ENCODE measurements at regions of chr20 and their contacts with region 1.

Region 1: GRCh38 chr20:50415516-50416113 is 94.6 kb upstream of the PTPN1 start:
- DNase-seq: peak; percentile 99
- ATAC-seq: peak; percentile 97

Region 2: GRCh38 chr20:50286609-50287008 is 129.0 kb before region 1 on chr20:
- intact Hi-C with region 1: no loop called
- DNase-seq: no peak
- ATAC-seq: peak; percentile 66

Region 3: GRCh38 chr20:50395258-50395729 is 20.3 kb before region 1 on chr20:
- intact Hi-C with region 1: loop called (anchors 1 kb)
- DNase-seq: peak; percentile 91
- ATAC-seq: peak; percentile 84

Region 4: DNA sequence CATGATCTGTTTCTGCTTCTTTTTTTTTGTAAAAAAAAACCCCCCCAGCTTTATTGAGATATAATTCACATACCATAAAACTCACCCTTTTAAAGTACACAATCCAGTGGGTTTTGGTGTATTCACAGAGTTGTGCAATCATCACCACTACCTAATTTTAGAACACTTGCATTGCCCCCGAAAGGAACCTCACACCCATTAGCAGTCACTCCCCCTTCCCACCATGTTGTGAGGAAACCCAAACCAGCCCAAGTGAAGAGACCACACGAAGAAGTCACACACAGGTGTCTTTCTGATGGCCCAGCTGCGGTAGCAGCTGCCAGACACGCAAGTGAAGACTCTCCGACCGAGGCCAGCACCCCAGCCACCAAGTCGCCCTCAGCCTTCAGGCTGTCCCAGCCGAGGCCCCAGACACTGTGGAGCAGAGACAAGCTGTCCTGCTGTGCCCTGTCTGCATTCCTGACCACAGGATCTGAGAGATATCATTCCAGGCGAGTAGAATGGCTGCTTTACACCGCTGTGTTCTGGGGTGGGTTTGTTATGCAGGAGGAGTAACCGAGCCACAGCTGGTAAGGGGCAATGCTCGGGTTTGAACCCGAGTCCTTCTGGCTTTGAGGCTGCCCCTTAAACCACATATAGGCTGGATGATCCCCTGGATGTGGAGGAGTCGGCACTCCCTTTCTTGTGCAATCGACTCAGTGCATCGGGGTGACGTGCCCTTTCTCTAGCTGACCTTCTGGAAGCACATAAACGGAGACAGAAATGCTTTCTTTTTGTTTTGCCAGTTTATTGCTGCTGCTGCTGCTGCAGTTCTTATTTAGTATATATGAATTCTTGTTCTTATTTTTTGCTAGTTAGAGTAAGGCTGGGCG is 35.5 kb after region 1 on chr20:
- intact Hi-C with region 1: loop called (anchors 5 kb)
- DNase-seq: no peak
- ATAC-seq: peak; percentile 59

Region 5: DNA sequence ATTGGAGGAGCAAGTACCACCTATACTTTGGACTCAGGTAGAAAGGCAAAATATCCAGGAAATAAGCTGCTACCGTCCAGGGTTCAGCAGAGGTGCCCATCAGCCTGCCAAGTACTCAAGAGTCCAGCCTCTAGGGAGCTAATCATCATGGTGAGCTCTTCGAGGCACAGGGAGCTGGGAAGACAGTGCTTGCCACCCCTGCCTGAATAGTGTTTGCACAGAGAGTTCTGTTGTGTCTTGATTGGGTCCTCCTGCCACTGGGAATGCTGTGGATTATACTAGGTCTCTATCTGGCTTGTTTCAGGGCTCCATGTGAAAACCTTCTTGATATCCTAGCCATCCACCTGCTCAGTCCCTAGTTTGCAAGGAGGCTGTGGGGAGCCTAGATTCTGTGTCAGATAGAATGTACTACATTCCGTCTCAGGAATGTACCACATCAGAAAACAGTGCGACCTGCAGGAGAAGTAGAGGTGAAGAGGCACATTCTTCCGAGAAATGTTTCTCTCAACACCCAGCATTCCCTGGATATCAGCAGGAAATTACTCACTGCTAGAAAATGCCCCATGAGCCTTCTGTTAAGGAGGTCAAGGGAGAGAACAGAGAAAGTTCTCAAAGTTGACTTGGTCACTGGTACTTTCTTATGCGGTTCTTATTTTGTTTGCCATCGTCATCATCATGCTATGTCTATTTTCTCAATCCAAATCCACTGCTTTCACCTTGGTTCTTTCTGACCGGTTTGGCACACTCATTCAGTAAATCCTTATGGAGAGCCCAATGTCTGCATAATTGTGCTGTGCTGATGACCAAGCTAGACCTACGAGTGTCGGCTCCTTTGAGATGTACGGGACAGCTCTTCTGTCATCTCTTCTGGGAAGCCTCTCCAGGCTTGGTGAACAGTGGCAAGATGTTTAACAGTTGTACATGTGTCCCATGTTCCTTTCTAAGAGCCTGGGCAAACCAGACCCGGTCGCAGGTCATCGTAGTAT is 125.3 kb after region 1 on chr20:
- intact Hi-C with region 1: no loop called
- DNase-seq: no peak
- ATAC-seq: peak; percentile 49

Region 6: GRCh38 chr20:50689864-50690633 is 274.4 kb after region 1 on chr20:
- intact Hi-C with region 1: no loop called
- DNase-seq: no peak
- ATAC-seq: peak; percentile 63

Measured in Right ventricle myocardium inferior (tissue), 1 donor.